GM13977 (cell line): ENCODE measurements at regions of chrX and their contacts with region 1.

Region 1: DNA sequence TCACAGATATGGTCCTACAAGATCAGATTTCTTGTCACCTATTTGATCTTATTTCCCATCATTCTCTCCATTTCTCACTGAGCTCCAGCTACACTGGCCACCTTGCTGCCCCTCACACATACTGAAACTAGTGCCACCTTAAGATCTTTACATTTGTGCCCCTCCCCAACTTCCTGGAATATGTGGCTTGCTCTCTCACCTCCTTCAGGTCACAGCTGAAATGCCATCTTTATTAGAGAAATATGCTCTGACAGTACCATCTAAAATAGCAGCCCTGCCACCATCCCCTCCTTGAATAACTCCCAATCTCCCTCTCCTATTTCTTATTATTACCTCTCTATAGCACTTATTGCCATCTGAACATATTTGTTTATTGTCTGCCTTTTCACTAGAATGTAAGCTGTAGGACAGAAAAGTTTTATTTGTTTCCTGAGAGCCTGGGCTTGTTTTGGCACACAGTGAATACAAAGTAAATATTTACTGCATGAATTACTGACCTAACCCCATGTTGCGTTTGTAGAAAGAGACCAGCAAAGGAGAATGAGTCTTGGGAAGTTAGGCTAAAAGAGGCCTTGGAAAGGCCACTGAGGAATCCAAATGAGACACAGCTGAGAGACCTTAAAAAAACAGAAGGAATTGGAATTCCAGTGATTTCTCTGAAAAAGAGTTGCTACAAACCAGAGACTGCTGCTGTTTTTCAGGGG is 22.7 kb downstream of the DYNLT3 start:
- DNase-seq: no peak
- CTCF ChIP-seq: no peak

Region 2: GRCh38 chrX:37677765-37678164 is 146.9 kb before region 1 on chrX:
- in situ Hi-C with region 1: no loop called
- DNase-seq: no peak
- CTCF ChIP-seq: no peak

Region 3: DNA sequence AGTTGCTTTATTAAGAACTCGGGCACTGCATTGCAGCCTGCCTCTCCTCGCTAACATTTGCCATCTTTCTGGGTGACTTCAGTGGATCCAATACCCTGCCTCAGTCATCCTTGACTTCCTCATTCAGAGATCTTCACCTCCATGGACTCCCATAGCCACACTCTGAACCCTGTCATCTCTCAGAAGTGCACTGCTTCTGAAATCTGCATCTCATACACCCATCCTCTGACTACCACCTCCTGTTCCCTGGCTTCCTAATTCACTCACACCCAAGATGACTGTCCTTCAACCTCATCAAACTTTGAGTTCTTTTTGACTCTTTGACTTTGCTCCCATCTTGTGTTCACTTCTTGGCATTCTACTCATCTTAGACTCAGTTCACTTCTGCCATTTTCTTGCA is 70.1 kb before region 1 on chrX:
- in situ Hi-C with region 1: loop called (anchors 5 kb)
- DNase-seq: no peak
- CTCF ChIP-seq: no peak

Region 4: GRCh38 chrX:38055170-38055847 is 230.7 kb after region 1 on chrX:
- in situ Hi-C with region 1: no loop called
- DNase-seq: no peak
- CTCF ChIP-seq: no peak